ENCODE measurements at regions of chr17 and their contacts with region 1.

Region 1: DNA sequence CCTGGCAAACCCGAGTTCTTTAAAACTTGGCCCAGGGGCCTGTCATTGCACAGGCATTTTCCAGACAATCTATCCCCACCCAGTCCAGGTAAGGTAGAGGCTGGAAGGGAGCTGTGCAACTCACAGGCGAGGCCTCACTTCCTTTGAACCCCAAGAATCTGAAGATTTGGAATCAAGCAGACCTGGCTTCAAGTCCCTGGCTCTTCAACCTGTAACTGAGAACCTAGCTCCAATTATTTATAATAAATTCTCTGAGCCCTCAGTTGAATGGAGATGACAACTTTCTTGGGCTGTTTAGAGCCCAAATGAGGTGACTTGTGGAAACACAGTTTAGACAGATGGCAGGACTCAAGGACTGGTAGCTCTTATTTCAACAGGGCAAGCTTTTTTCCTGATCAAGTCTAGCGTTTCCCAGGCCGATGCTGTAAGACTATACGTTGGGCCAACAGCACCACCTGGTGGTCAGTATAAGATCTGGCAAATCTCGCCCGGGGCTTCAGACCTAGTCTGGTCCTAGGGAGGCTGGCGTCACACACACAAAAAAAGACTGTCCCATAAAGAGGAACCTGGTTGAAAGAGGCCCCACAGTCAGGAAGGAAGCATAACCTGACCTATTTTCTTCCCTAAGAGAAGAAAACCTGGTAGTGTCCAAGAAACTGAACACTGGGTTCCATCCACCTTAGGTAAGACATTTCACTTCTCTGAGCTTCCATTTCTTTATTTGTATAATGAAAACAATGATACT is 117.9 kb downstream of the C17orf67 start:
- H3K4me3 ChIP-seq: no peak overlapping the region
- H3K27ac ChIP-seq: no peak overlapping the region
- H3K4me1 ChIP-seq: no peaks in the 10 kb centered on the region
- CTCF ChIP-seq: peak; percentile 52; the same call in 1 of the 2 replicates

Region 2: GRCh38 chr17:56510554-56511342 is 205.0 kb before region 1 on chr17:
- CTCF ChIA-PET with region 1: interaction called, 15 read pairs
- POLR2A ChIA-PET with region 1: no interaction called
- H3K4me3 ChIP-seq: no peak overlapping the region
- H3K27ac ChIP-seq: no peak overlapping the region
- H3K4me1 ChIP-seq: no peaks in the 10 kb centered on the region
- CTCF ChIP-seq: no peak

Region 3: GRCh38 chr17:56602292-56603130 is 113.3 kb before region 1 on chr17:
- CTCF ChIA-PET with region 1: interaction called, 11 read pairs
- POLR2A ChIA-PET with region 1: interaction called, 3 read pairs
- H3K4me3 ChIP-seq: no peak overlapping the region
- H3K27ac ChIP-seq: no peak overlapping the region
- H3K4me1 ChIP-seq: peaks cover 12% of the 10 kb centered on the region
- CTCF ChIP-seq: no peak

Region 4: DNA sequence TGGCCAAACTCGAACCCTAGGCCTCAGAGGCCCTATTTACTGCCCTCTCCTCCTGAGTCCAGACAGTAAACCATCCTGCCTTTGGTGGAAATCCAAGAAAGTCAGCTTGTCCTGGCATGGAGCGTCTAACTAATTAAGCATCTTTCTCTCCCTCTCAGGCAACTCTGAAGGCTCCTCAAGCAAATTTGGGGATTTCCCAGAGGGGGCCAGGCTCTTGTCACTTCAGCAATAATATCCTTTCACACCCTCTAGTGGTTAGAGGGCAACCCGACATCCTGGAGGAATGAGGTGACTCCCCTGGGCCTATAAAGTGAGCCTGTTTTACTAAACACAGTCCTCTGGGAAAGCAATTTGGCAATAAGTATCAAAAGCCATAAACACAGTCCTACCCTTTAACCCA is 61.9 kb before region 1 on chr17:
- CTCF ChIA-PET with region 1: interaction called, 47 read pairs
- POLR2A ChIA-PET with region 1: no interaction called
- H3K4me3 ChIP-seq: no peak overlapping the region
- H3K27ac ChIP-seq: no peak overlapping the region
- H3K4me1 ChIP-seq: no peaks in the 10 kb centered on the region
- CTCF ChIP-seq: peak; percentile 39; the same call in 1 of the 2 replicates

Region 5: GRCh38 chr17:56699186-56699895 is 16.4 kb before region 1 on chr17:
- CTCF ChIA-PET with region 1: interaction called, 24 read pairs
- POLR2A ChIA-PET with region 1: interaction called, 4 read pairs
- H3K4me3 ChIP-seq: no peak overlapping the region
- H3K27ac ChIP-seq: 0 out of 2 replicates have a peak overlapping the region, but pooled peaks have one; percentile 18
- H3K4me1 ChIP-seq: 0 out of 2 replicates have a peak, but pooled peaks cover 4% of the 10 kb centered on the region
- CTCF ChIP-seq: no peak

Region 6: GRCh38 chr17:56845934-56846333 is 130.1 kb after region 1 on chr17:
- CTCF ChIA-PET with region 1: no interaction called
- POLR2A ChIA-PET with region 1: no interaction called
- H3K4me3 ChIP-seq: no peak overlapping the region
- H3K27ac ChIP-seq: no peak overlapping the region
- H3K4me1 ChIP-seq: no peaks in the 10 kb centered on the region
- CTCF ChIP-seq: no peak

Region 7: GRCh38 chr17:56939901-56940343 is 224.1 kb after region 1 on chr17:
- CTCF ChIA-PET with region 1: interaction called, 10 read pairs
- POLR2A ChIA-PET with region 1: interaction called, 3 read pairs
- H3K4me3 ChIP-seq: no peak overlapping the region
- H3K27ac ChIP-seq: no peak overlapping the region
- H3K4me1 ChIP-seq: no peaks in the 10 kb centered on the region
- CTCF ChIP-seq: peak; percentile 51

Measured in HEK293 (cell line).